ENCODE measurements at regions of chr2 and their contacts with region 1.

Region 1: GRCh38 chr2:201164166-201164565 is 18.8 kb upstream of the CASP10 start:
- DNase-seq: no peak
- H3K4me3 ChIP-seq: no peak overlapping the region
- H3K27ac ChIP-seq: no peak overlapping the region
- H3K4me1 ChIP-seq: no peaks in the 10 kb centered on the region
- H3K27me3 ChIP-seq: no peaks in the 10 kb centered on the region
- CTCF ChIP-seq: no peak

Region 2: GRCh38 chr2:201059961-201060755 is 104.0 kb before region 1 on chr2:
- CTCF ChIA-PET with region 1: no interaction called
- dilution Hi-C with region 1: loop called (anchors 5 kb)
- in situ Hi-C with region 1: no loop called
- intact Hi-C with region 1: no loop called
- DNase-seq: no peak
- H3K4me3 ChIP-seq: no peak overlapping the region
- H3K27ac ChIP-seq: no peak overlapping the region
- H3K4me1 ChIP-seq: no peaks in the 10 kb centered on the region
- H3K27me3 ChIP-seq: no peaks in the 10 kb centered on the region
- CTCF ChIP-seq: no peak

Region 3: DNA sequence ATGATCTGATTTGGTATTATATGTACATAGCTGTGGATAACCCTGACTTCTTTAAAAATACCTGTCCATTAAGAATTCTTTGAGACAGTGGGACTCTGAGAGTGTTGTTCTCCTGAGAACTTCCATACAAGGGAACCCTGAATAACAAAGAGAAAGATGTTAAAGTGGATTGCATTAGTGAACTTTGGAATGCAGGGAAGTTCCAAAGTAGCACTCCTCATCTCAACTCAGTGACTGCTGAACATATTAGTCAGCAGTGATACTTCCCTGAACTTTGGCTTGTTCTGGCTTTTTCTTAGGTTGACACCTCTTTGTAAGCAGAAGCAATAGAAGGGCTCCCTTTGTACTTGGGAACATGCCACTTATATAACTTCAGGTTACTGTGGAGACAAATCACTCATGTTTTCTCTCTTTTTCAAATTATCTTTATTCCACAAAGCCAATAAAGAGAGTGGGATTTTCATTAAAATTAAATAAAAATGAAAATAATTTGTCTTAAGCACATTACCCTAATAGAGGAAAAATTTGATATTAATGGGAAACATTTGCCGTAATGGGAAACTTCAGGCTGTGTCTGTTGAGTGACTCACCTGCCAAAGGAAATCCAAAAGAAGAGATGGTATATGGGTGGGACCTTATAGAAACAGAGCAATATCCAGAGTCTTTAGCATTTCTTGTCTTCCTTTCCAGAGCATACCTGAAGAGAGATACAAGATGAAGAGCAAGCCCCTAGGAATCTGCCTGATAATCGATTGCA is 14.9 kb before region 1 on chr2:
- CTCF ChIA-PET with region 1: no interaction called
- dilution Hi-C with region 1: no loop called
- in situ Hi-C with region 1: no loop called
- intact Hi-C with region 1: no loop called
- DNase-seq: peak; percentile 98
- H3K4me3 ChIP-seq: peak overlapping the region in 2 of 3 experiments; percentile 4 to 16
- H3K27ac ChIP-seq: peak overlapping the region; percentile 100
- H3K4me1 ChIP-seq: peaks cover 44% of the 10 kb centered on the region
- H3K27me3 ChIP-seq: no peaks in the 10 kb centered on the region
- CTCF ChIP-seq: no peak

Region 4: DNA sequence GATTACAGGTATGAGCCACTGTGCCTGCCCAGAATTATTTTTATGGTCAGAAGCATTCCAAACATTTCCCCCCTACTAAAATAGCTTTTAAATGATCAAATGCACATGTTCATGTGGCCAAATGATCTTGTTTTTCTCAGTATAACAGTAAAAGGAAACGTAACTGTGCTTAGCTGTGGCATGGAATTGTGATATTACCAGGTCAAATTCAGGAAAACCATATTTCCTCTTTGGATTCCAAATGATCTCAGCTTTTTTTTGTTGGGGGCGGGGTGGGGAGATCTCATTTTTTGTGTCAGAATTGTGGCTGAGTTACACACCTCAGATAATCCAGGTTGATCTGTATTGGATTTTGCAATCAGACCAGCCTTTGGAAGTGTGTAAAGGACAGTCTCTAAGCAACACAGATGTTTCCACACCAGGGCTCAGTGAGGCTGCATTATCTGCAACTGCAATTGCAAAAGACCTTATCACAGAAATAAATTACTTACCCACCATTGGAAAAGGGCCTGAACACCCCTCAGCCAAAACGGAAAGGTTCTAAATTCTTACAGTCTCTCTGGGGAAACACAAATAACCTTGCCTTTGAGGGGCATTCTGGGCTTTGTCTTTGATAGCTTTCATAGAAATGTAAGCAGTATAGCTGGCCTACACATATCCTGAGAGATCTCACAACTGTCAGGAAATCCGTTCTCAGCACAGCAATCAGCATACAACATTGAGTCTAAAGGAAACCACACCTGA is 27.1 kb after region 1 on chr2:
- CTCF ChIA-PET with region 1: no interaction called
- dilution Hi-C with region 1: no loop called
- in situ Hi-C with region 1: no loop called
- intact Hi-C with region 1: no loop called
- DNase-seq: no peak
- H3K4me3 ChIP-seq: no peak overlapping the region
- H3K27ac ChIP-seq: no peak overlapping the region
- H3K4me1 ChIP-seq: no peaks in the 10 kb centered on the region
- H3K27me3 ChIP-seq: no peaks in the 10 kb centered on the region
- CTCF ChIP-seq: no peak

Region 5: DNA sequence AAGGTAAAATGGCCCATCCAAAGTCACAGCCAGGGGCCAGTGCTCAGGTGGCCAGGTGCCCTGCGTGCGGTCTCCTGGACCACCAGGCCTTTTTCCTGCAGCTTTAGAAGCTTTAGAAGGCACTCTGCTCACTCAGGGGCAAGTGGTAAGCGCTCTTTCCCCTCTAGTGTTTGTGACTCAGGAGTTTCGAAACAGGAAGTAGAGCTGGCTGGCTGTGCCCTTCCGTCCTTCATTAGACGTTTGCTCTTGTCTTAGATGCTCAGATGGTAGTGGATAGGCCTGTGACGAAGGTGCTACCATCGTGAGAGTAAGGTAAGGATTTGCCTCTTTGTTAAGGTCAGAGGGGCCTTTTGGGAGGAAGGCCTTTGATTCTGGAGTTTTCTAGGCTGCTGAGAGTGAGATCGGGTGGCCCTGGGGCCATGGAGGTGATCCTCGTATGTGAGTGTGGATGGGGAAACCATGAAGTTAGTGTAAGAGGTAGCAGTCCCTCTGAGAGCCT is 96.2 kb after region 1 on chr2 and contains the start of gene CASP8:
- CTCF ChIA-PET with region 1: no interaction called
- dilution Hi-C with region 1: no loop called
- in situ Hi-C with region 1: no loop called
- intact Hi-C with region 1: no loop called
- DNase-seq: peak; percentile 24
- H3K4me3 ChIP-seq: peak within 1 kb of the TSS in 1 of 3 experiments; percentile 57
- H3K27ac ChIP-seq: peak within 1 kb of the TSS; percentile 96
- H3K4me1 ChIP-seq: peaks cover 24% of the 10 kb centered on the region
- H3K27me3 ChIP-seq: no peaks in the 10 kb centered on the region
- CTCF ChIP-seq: no peak
- total RNA-seq, gene CASP8: 17.7 to 25.5 TPM

Region 6: DNA sequence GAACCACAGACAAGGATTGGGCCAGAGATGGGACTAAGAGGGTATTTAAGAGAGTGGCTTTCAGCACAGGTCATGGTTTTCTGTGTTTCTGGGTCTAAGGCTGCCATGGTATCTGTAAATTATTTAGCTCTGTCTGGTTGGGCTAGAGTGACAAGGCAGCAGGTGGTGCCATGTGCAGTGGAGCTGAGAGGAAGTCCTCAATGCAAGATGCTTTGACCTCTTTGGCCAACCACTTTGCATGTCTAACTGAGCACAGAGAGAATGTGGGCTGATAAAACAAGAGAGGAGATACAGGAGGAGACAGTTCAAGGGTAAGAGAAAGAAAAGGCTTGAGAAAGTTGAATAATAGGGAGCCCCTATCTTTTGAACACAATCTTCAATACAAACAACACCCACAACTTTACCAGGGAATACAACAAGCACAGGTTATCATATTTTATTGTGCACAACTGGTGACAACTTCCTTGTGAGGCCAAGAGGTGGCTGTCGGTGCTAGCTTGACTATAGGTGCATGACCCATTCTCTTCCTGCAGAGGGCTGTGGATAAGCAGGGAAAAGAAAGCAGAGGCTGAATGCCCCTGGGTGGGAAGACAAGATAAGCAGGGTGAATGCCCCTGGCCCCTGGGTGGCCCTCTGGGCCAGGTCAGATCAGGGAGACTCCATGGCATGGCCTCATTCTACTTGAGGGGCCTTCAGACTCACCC is 180.6 kb after region 1 on chr2:
- CTCF ChIA-PET with region 1: no interaction called
- dilution Hi-C with region 1: no loop called
- in situ Hi-C with region 1: no loop called
- intact Hi-C with region 1: no loop called
- DNase-seq: no peak
- H3K4me3 ChIP-seq: no peak overlapping the region
- H3K27ac ChIP-seq: no peak overlapping the region
- H3K4me1 ChIP-seq: no peaks in the 10 kb centered on the region
- H3K27me3 ChIP-seq: no peaks in the 10 kb centered on the region
- CTCF ChIP-seq: no peak

Measured in mammary epithelial cell (primary cell).